Panc1 (cell line): ENCODE measurements at regions of chr3 and their contacts with region 1.

Region 1: DNA sequence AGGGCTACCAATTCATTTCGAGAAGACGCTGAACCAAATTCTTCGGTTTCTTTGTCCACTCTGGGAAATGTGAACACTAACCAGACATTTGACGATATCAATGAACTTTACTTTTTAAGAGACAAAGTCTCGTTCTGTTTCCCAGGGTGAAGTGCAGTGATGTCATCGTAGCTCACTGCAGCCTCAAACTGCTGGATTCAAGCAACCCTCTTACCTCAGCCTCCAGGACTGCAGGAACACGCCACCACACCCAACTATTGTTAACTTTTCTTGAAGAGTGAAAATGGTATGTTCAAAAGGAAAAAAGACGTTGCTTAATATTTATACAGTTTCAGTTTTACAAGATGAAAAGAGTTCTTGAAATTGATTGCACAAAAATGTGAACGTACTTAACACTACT is 30.6 kb downstream of the MB21D2 start:
- DNase-seq: peak; percentile 74
- ATAC-seq: peak; percentile 50; the same call in 1 of the 2 replicates
- H3K4me3 ChIP-seq: peak overlapping the region; percentile 20 to 61
- H3K27ac ChIP-seq: peak overlapping the region; percentile 80
- H3K4me1 ChIP-seq: peaks cover 83% of the 10 kb centered on the region
- H3K27me3 ChIP-seq: no peaks in the 10 kb centered on the region
- CTCF ChIP-seq: no peak

Region 2: GRCh38 chr3:192831111-192831644 is 55.9 kb before region 1 on chr3:
- CTCF ChIA-PET with region 1: interaction called, 8 read pairs
- POLR2A ChIA-PET with region 1: no interaction called
- in situ Hi-C with region 1: no loop called
- intact Hi-C with region 1: loop called (anchors 5 kb)
- DNase-seq: no peak
- ATAC-seq: no peak
- H3K4me3 ChIP-seq: no peak overlapping the region
- H3K27ac ChIP-seq: peak overlapping the region; percentile 2; the same call in 1 of the 2 replicates
- H3K4me1 ChIP-seq: peaks cover 20% of the 10 kb centered on the region
- H3K27me3 ChIP-seq: no peaks in the 10 kb centered on the region
- CTCF ChIP-seq: no peak